ENCODE measurements at regions of chr2 and their contacts with region 1.

Region 1: GRCh38 chr2:68909793-68910674 is 38.8 kb upstream of the BMP10 start:
- DNase-seq: peak; percentile 56
- H3K4me3 Mint-ChIP-seq: peak overlapping the region; percentile 12
- H3K27ac Mint-ChIP-seq: peak overlapping the region; percentile 70
- H3K4me1 Mint-ChIP-seq: peaks cover 33% of the 10 kb centered on the region
- H3K27me3 Mint-ChIP-seq: no peaks in the 10 kb centered on the region

Region 2: DNA sequence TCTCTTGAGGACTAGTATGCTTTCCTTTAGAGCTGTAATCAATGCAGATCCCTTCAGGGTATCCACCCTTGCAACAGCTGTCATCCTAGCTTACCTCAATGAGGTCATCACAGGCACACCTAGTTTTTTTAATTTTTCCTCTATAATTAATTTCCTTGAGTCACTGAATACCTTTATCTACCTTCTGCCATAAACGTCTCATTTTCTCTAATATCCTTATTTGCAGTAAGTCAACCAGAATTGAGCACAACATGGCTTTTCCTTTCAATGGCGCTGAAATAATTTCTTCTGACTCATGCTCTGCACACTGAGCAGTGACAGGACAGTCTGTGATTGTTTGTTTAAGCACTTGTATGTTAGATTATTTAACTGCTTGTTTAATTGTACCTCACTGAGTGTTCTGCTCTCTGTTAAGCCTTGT is 1463.5 kb before region 1 on chr2:
- intact Hi-C with region 1: no loop called
- DNase-seq: no peak
- H3K4me3 Mint-ChIP-seq: no peak overlapping the region
- H3K27ac Mint-ChIP-seq: no peak overlapping the region
- H3K4me1 Mint-ChIP-seq: no peaks in the 10 kb centered on the region
- H3K27me3 Mint-ChIP-seq: no peaks in the 10 kb centered on the region

Region 3: GRCh38 chr2:68519236-68519635 is 390.8 kb before region 1 on chr2:
- intact Hi-C with region 1: loop called (anchors 1 kb)
- DNase-seq: no peak
- H3K4me3 Mint-ChIP-seq: no peak overlapping the region
- H3K27ac Mint-ChIP-seq: no peak overlapping the region
- H3K4me1 Mint-ChIP-seq: peaks cover 24% of the 10 kb centered on the region
- H3K27me3 Mint-ChIP-seq: no peaks in the 10 kb centered on the region

Region 4: DNA sequence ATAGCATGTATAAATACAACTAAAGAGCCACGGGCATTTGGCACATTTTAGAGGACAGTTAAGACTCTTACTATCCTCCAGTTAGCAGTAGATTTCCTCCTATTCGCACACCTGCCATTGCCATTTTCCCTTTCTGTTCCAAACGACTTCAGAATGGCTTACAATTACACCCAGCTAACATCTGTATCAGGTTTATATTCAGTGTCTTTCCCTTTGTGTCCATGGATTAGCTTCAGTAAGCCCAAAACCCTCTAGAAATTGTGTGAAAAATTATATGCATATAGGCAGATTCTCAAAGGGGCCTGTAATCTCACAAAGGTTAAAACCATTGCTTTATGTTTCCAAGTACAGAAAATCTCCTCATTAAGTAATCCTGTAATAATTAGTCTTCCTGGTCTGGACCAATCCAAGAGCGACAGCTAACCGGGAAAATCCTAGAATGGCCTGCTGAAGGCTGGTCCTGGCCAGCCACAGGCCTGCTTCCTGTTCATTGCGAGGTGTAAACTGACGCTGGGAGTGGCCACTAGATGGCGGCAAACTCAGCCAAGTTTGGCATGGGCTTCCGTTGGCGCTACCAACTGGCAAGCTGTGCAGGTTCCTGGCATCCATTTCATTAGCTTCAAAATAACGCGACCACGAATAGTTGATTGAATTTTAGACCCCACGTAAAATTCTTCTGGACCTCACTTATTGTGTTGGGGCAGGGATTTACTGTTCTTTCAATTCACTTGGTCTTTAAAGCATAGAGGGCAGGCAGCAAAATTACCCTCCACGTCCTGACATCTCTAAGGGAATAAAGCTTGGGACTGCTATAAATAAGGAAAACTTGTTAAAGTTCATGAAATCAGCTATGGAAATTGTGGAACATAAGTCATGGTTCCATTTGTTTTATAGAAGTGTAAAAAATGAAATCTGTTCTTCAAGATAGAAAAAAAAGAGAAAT is 158.4 kb before region 1 on chr2:
- intact Hi-C with region 1: loop called (anchors 1 kb)
- DNase-seq: peak; percentile 78
- H3K4me3 Mint-ChIP-seq: peak overlapping the region; percentile 38
- H3K27ac Mint-ChIP-seq: peak overlapping the region; percentile 84
- H3K4me1 Mint-ChIP-seq: peaks cover 91% of the 10 kb centered on the region
- H3K27me3 Mint-ChIP-seq: no peaks in the 10 kb centered on the region

Region 5: GRCh38 chr2:68774569-68775271 is 135.3 kb before region 1 on chr2:
- intact Hi-C with region 1: loop called (anchors 2 kb)
- DNase-seq: peak; percentile 66
- H3K4me3 Mint-ChIP-seq: peak overlapping the region; percentile 81
- H3K27ac Mint-ChIP-seq: peak overlapping the region; percentile 91
- H3K4me1 Mint-ChIP-seq: peaks cover 89% of the 10 kb centered on the region
- H3K27me3 Mint-ChIP-seq: no peaks in the 10 kb centered on the region

Region 6: GRCh38 chr2:68824831-68825230 is 85.2 kb before region 1 on chr2:
- intact Hi-C with region 1: no loop called
- DNase-seq: no peak
- H3K4me3 Mint-ChIP-seq: no peak overlapping the region
- H3K27ac Mint-ChIP-seq: no peak overlapping the region
- H3K4me1 Mint-ChIP-seq: peaks cover 38% of the 10 kb centered on the region
- H3K27me3 Mint-ChIP-seq: no peaks in the 10 kb centered on the region

Region 7: GRCh38 chr2:68837861-68838341 is 72.1 kb before region 1 on chr2:
- intact Hi-C with region 1: loop called (anchors 1 kb)
- DNase-seq: no peak
- H3K4me3 Mint-ChIP-seq: no peak overlapping the region
- H3K27ac Mint-ChIP-seq: peak overlapping the region; percentile 83
- H3K4me1 Mint-ChIP-seq: peaks cover 39% of the 10 kb centered on the region
- H3K27me3 Mint-ChIP-seq: peaks cover 4% of the 10 kb centered on the region

Region 8: GRCh38 chr2:68857855-68858456 is 52.1 kb before region 1 on chr2:
- intact Hi-C with region 1: no loop called
- DNase-seq: no peak
- H3K4me3 Mint-ChIP-seq: no peak overlapping the region
- H3K27ac Mint-ChIP-seq: peak overlapping the region; percentile 13
- H3K4me1 Mint-ChIP-seq: peaks cover 33% of the 10 kb centered on the region
- H3K27me3 Mint-ChIP-seq: no peaks in the 10 kb centered on the region

Region 9: GRCh38 chr2:68925295-68925896 is 15.4 kb after region 1 on chr2:
- intact Hi-C with region 1: loop called (anchors 1 kb)
- DNase-seq: peak; percentile 34
- H3K4me3 Mint-ChIP-seq: no peak overlapping the region
- H3K27ac Mint-ChIP-seq: no peak overlapping the region
- H3K4me1 Mint-ChIP-seq: peaks cover 12% of the 10 kb centered on the region
- H3K27me3 Mint-ChIP-seq: peaks cover 18% of the 10 kb centered on the region